HepG2 (cell line): ENCODE measurements at regions of chr16 and their contacts with region 1.

Region 1: GRCh38 chr16:62424206-62424605 is 388.0 kb upstream of the CDH8 start:
- DNase-seq: no peak
- ATAC-seq: no peak
- H3K4me3 ChIP-seq: no peak overlapping the region
- H3K27ac ChIP-seq: no peak overlapping the region
- H3K4me1 ChIP-seq: no peaks in the 10 kb centered on the region
- H3K27me3 ChIP-seq: no peaks in the 10 kb centered on the region
- CTCF ChIP-seq: no peak
- EP300 ChIP-seq: no peak
- POLR2A ChIP-seq: no peak
- RAD21 ChIP-seq: no peak

Region 2: GRCh38 chr16:62363501-62363900 is 60.7 kb before region 1 on chr16:
- CTCF ChIA-PET with region 1: no interaction called
- POLR2A ChIA-PET with region 1: no interaction called
- in situ Hi-C with region 1: no loop called
- intact Hi-C with region 1: no loop called
- DNase-seq: no peak
- ATAC-seq: no peak
- H3K4me3 ChIP-seq: no peak overlapping the region
- H3K27ac ChIP-seq: no peak overlapping the region
- H3K4me1 ChIP-seq: no peaks in the 10 kb centered on the region
- H3K27me3 ChIP-seq: no peaks in the 10 kb centered on the region
- CTCF ChIP-seq: no peak
- EP300 ChIP-seq: no peak
- POLR2A ChIP-seq: no peak
- RAD21 ChIP-seq: no peak

Region 3: GRCh38 chr16:62408760-62409159 is 15.4 kb before region 1 on chr16:
- CTCF ChIA-PET with region 1: no interaction called
- POLR2A ChIA-PET with region 1: no interaction called
- in situ Hi-C with region 1: no loop called
- intact Hi-C with region 1: no loop called
- DNase-seq: no peak
- ATAC-seq: no peak
- H3K4me3 ChIP-seq: no peak overlapping the region
- H3K27ac ChIP-seq: no peak overlapping the region
- H3K4me1 ChIP-seq: no peaks in the 10 kb centered on the region
- H3K27me3 ChIP-seq: no peaks in the 10 kb centered on the region
- CTCF ChIP-seq: no peak
- EP300 ChIP-seq: no peak
- POLR2A ChIP-seq: no peak
- RAD21 ChIP-seq: no peak

Region 4: GRCh38 chr16:62585041-62585545 is 160.9 kb after region 1 on chr16:
- CTCF ChIA-PET with region 1: no interaction called
- POLR2A ChIA-PET with region 1: no interaction called
- in situ Hi-C with region 1: no loop called
- intact Hi-C with region 1: no loop called
- DNase-seq: no peak
- ATAC-seq: no peak
- H3K4me3 ChIP-seq: no peak overlapping the region
- H3K27ac ChIP-seq: no peak overlapping the region
- H3K4me1 ChIP-seq: no peaks in the 10 kb centered on the region
- H3K27me3 ChIP-seq: no peaks in the 10 kb centered on the region
- CTCF ChIP-seq: no peak
- EP300 ChIP-seq: no peak
- POLR2A ChIP-seq: no peak
- RAD21 ChIP-seq: no peak

Region 5: GRCh38 chr16:63467513-63467912 is 1043.3 kb after region 1 on chr16:
- CTCF ChIA-PET with region 1: no interaction called
- POLR2A ChIA-PET with region 1: no interaction called
- in situ Hi-C with region 1: no loop called
- intact Hi-C with region 1: loop called (anchors 5 kb)
- DNase-seq: no peak
- ATAC-seq: no peak
- H3K4me3 ChIP-seq: no peak overlapping the region
- H3K27ac ChIP-seq: no peak overlapping the region
- H3K4me1 ChIP-seq: no peaks in the 10 kb centered on the region
- H3K27me3 ChIP-seq: no peaks in the 10 kb centered on the region
- CTCF ChIP-seq: no peak
- EP300 ChIP-seq: no peak
- POLR2A ChIP-seq: no peak
- RAD21 ChIP-seq: no peak